Right ventricle myocardium superior (tissue), 1 donor: ENCODE measurements at regions of chr3 and their contacts with region 1.

Region 1: DNA sequence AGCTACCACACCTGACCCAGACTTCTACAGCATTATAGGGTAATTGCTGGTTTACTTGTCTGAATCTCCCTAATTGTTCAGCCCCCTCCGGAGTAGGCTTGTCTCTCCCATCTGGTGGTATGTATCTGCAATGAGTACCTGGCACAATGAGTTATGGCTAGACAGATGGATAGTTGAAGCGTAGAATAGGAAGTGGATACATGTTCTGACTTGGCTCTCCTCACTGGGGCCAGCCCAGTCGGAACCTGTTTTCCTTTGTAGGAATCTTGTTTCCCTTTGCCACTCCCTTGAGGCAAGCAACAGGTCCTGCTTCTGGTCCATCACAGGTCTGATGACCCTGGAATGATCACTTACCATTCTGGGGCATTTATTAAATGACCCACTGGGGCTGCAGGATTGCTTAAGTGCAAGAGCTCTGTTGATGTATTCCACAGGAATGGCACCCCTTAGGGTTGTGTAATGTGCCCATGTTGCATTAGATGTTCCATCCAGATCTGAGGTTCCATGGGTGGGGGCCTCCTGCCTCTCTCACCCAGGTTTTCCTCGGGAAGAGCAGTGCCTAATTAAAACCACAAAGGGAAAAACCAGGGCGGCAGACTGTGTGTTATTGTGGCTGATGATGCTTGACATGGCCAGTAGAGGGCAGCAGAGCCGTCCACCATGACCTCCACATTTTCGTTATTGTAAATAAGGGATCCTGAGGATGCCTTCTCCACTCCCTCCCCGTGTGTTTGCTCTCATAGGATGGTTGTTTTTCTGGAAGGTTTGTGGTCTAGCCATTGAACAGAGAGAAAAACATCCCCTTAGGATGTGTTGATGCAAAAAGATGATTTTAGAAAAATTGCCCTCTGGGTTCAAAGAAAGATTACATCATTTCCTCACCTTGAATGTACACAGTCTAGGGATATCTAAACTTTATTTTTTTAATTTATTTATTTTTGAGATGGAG is 58.0 kb downstream of the CMTM8 start:
- DNase-seq: peak; percentile 66
- ATAC-seq: peak; percentile 92

Region 2: GRCh38 chr3:32177702-32178198 is 118.8 kb before region 1 on chr3:
- intact Hi-C with region 1: loop called (anchors 5 kb)
- DNase-seq: no peak
- ATAC-seq: peak; percentile 94

Region 3: GRCh38 chr3:32340039-32340438 is 43.5 kb after region 1 on chr3:
- intact Hi-C with region 1: loop called (anchors 2 kb)
- DNase-seq: no peak
- ATAC-seq: peak; percentile 88